ENCODE measurements at regions of chr18 and their contacts with region 1.

Region 1: DNA sequence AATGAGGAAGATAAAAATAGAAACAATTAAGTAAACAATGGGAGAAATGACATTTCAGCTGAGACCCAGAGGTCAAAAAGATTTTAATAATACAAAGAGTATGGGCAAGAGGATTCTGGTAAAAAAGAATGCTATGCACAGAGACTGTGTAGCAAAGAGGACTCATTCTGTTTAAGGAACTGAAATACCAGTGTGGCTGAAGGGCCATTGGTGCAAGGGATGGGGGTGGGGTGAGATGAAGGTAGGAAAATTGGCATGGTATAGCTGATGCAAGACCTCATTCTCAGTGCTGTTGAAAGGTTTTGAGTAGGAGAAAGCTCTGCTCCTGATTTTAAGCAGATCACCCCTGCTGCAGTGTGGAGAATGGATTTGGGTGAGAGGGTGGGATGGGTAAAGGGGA is 10.8 kb downstream of the GALNT1 start:
- DNase-seq: peak; percentile 63
- CTCF ChIP-seq: no peak

Region 2: DNA sequence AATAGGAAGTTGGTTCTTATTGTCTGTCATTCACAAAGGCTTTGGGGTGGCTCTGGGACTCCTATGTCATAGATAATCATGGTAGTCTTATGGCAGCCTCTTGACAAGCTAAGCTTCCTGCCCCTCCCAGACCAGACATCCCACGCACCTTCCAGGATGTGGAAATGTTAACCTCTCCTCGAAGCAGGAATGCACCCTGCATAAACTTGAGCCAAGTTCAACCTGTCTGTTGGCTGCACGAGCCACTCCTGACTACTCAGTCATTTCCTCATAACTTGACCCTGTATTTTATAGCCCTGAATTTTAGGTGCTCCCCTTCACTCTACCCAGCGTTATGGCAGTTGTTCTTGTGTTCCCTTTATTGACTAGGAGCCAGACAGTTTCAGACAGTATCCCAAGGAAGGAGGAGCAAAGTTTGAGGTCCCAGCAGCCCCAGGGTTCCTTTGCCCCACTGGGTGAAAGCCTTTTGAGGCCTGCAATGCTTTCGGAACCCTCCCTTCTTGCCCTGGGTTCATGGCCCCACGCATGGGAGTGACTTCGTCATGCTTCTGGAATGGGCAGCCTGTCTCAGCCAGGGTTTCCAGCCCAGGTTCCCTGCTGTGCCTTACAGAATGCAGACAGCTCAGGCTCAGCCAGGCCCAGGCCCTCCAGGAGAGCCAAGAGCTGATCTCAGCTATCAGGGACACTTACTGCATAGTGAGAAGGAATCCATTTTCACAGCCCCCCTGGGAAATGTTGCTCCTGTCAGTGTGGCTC is 78.9 kb before region 1 on chr18:
- CTCF ChIA-PET with region 1: no interaction called
- POLR2A ChIA-PET with region 1: no interaction called
- DNase-seq: no peak
- CTCF ChIP-seq: no peak

Region 3: GRCh38 chr18:35581898-35582641 is 10.2 kb before region 1 on chr18:
- CTCF ChIA-PET with region 1: interaction called, 11 read pairs
- POLR2A ChIA-PET with region 1: interaction called, 3 read pairs
- DNase-seq: peak; percentile 24
- CTCF ChIP-seq: no peak

Measured in GM10248 (cell line).